ENCODE measurements at regions of chr13 and their contacts with region 1.

Region 1: DNA sequence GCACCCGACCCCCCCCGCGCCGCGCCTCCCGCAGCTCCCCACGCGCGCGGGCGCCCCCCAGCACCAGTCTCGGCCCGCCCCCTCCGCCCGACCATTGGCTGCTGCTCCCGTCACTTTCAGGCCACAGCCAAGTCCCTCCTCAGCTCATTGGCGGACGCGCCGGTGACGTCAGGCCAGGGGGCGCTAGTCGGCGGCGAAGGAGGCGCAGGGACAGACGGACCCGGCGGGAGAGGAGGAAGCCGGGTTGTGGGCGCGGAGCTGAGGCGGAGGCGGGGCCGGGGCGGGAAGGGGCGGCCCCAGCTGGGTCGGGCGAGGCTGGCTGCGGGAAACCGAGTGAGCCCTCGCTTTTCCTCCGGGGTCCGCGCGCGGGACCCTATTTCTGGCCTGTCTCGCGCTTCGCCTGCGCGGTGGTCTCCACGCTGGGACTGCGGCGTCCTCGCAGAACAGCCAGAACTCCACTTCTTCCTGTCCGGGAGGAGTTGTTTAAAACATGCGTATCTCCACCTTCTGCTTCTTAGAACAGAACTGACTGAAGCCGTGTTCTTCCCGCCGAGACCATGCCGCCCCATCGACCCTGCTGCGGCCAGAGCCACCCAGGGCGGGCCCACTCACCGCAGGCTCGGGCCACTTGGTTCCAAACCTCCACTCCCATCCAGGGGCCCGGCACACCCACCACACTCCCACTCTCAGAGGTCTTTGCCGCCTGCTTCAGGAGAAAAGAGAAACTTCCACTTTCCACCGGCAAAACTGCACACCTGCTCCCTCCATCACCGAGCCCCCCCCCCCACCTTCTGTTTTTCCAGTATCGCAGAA is 459 bp upstream of the TMTC4 start:
- DNase-seq: peak; percentile 96
- H3K4me3 ChIP-seq: peak overlapping the region; percentile 66 to 94 (median 81)
- H3K27ac ChIP-seq: no peak overlapping the region
- H3K4me1 ChIP-seq: peaks cover 7% of the 10 kb centered on the region
- H3K27me3 ChIP-seq: no peaks in the 10 kb centered on the region
- CTCF ChIP-seq: peak in 1 of 2 donors; percentile 52

Region 2: DNA sequence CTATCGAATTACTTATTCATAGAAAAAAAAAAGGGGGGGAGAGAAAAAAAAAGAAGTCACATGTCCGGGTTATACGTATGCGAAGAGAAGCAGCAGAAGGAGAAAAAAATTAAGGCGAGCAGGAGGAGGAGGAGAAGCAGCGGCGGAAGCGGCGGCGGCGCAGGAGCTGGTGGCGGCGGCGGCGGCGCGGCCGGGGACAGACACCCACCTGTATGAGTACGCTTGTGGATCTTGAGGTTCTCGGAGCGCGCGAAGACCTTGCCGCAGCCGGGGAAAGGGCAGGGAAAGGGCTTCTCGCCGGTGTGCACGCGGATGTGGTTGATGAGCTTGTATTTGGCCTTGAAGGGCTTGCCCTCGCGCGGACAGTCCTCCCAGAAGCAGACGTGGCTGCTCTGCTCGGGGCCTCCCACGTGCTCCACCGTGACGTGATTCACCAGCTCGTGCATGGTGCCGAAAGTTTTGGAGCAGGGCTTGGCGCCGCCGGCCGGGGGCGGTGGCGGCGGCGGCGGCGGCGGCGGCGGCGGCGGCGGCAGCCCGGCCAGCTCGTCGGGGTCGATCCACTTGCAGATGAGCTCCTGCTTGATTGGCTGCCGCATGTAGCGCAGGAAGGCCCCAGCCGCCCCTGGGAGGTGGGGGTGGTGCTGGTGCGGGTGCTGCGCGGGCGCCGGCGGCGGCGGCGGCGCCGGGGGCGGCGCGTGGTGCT is 705.0 kb before region 1 on chr13:
- CTCF ChIA-PET with region 1: no interaction called
- dilution Hi-C with region 1: no loop called
- in situ Hi-C with region 1: no loop called
- intact Hi-C with region 1: loop called (anchors 10 kb)
- DNase-seq: peak; percentile 27
- H3K4me3 ChIP-seq: peak overlapping the region in 2 of 3 experiments; percentile 14 to 43
- H3K27ac ChIP-seq: no peak overlapping the region
- H3K4me1 ChIP-seq: peaks cover 4% of the 10 kb centered on the region
- H3K27me3 ChIP-seq: peaks cover 80% of the 10 kb centered on the region
- CTCF ChIP-seq: no peak

Region 3: GRCh38 chr13:100476963-100477362 is 198.1 kb before region 1 on chr13:
- CTCF ChIA-PET with region 1: no interaction called
- dilution Hi-C with region 1: no loop called
- in situ Hi-C with region 1: no loop called
- intact Hi-C with region 1: no loop called
- DNase-seq: no peak
- H3K4me3 ChIP-seq: no peak overlapping the region
- H3K27ac ChIP-seq: no peak overlapping the region
- H3K4me1 ChIP-seq: no peaks in the 10 kb centered on the region
- H3K27me3 ChIP-seq: no peaks in the 10 kb centered on the region
- CTCF ChIP-seq: no peak

Region 4: GRCh38 chr13:100573121-100573520 is 101.9 kb before region 1 on chr13:
- CTCF ChIA-PET with region 1: no interaction called
- dilution Hi-C with region 1: no loop called
- in situ Hi-C with region 1: no loop called
- intact Hi-C with region 1: loop called (anchors 1 kb)
- DNase-seq: peak; percentile 51
- H3K4me3 ChIP-seq: no peak overlapping the region
- H3K27ac ChIP-seq: no peak overlapping the region
- H3K4me1 ChIP-seq: no peaks in the 10 kb centered on the region
- H3K27me3 ChIP-seq: peaks cover 2% of the 10 kb centered on the region
- CTCF ChIP-seq: peak; percentile 76 to 85

Region 5: GRCh38 chr13:100611678-100612492 is 63.2 kb before region 1 on chr13:
- CTCF ChIA-PET with region 1: no interaction called
- dilution Hi-C with region 1: no loop called
- in situ Hi-C with region 1: no loop called
- intact Hi-C with region 1: loop called (anchors 5 kb)
- DNase-seq: peak; percentile 73
- H3K4me3 ChIP-seq: no peak overlapping the region
- H3K27ac ChIP-seq: no peak overlapping the region
- H3K4me1 ChIP-seq: no peaks in the 10 kb centered on the region
- H3K27me3 ChIP-seq: peaks cover 16% of the 10 kb centered on the region
- CTCF ChIP-seq: no peak

Region 6: GRCh38 chr13:100633461-100633860 is 41.6 kb before region 1 on chr13:
- CTCF ChIA-PET with region 1: no interaction called
- dilution Hi-C with region 1: no loop called
- in situ Hi-C with region 1: no loop called
- intact Hi-C with region 1: loop called (anchors 5 kb)
- DNase-seq: peak; percentile 74
- H3K4me3 ChIP-seq: no peak overlapping the region
- H3K27ac ChIP-seq: no peak overlapping the region
- H3K4me1 ChIP-seq: no peaks in the 10 kb centered on the region
- H3K27me3 ChIP-seq: no peaks in the 10 kb centered on the region
- CTCF ChIP-seq: no peak

Region 7: DNA sequence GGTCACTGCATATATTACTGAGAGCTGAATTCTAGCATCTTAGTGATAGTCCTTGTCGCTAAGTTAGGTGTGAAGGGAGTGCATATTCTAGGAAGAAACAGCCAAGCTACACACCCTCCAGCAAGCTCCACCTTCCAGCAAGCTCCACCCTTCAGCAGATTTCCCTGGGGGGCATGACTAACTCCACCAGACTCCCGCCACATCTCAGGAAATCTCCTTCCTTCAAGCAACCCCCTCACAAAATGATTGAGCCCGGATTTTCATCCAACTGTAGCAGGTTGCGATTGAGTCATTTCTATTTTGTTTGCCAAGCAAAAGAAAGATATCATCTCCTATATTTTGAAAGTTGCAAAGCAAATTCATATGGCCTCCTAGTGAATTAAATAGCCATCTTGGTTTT is 161.6 kb after region 1 on chr13:
- CTCF ChIA-PET with region 1: no interaction called
- dilution Hi-C with region 1: no loop called
- in situ Hi-C with region 1: no loop called
- intact Hi-C with region 1: no loop called
- DNase-seq: peak; percentile 4
- H3K4me3 ChIP-seq: no peak overlapping the region
- H3K27ac ChIP-seq: no peak overlapping the region
- H3K4me1 ChIP-seq: no peaks in the 10 kb centered on the region
- H3K27me3 ChIP-seq: no peaks in the 10 kb centered on the region
- CTCF ChIP-seq: no peak

Region 8: DNA sequence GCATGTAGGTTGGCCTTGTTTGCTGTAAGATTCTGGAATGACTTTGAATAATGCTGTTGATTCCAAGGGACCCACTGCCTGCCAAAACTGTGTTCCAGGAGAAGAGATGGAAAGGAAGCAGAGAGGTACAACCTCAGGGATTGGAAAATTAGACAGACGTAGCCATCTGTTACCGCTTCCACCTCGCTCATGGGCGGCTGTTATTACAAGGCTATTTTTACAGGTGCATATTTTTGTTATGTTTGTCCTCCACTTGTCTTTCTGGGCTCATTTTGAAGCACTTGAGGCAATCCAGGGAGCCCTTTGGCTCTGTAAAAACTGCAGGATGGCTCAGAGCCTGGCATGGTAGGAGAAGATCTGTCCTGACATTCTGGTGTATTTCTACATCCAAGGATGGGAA is 276.0 kb after region 1 on chr13:
- CTCF ChIA-PET with region 1: no interaction called
- dilution Hi-C with region 1: no loop called
- in situ Hi-C with region 1: no loop called
- intact Hi-C with region 1: no loop called
- DNase-seq: no peak
- H3K4me3 ChIP-seq: no peak overlapping the region
- H3K27ac ChIP-seq: no peak overlapping the region
- H3K4me1 ChIP-seq: no peaks in the 10 kb centered on the region
- H3K27me3 ChIP-seq: no peaks in the 10 kb centered on the region
- CTCF ChIP-seq: no peak

Measured in mammary epithelial cell (primary cell).